ENCODE measurements at regions of chr1 and their contacts with region 1.

Region 1: GRCh38 chr1:62436466-62437256 is at the start of gene USP1:
- DNase-seq: peak; percentile 100
- H3K4me3 ChIP-seq: peak within 1 kb of the TSS; percentile 73 to 95 (median 78)
- H3K27ac ChIP-seq: peak within 1 kb of the TSS; percentile 89
- H3K4me1 ChIP-seq: peaks cover 13% of the 10 kb centered on the region
- H3K27me3 ChIP-seq: no peaks in the 10 kb centered on the region
- CTCF ChIP-seq: peak in 1 of 2 donors; percentile 7
- POLR2A ChIP-seq: peak; percentile 43
- total RNA-seq, gene USP1: 37.8 and 38.4 TPM in 2 replicates

Region 2: DNA sequence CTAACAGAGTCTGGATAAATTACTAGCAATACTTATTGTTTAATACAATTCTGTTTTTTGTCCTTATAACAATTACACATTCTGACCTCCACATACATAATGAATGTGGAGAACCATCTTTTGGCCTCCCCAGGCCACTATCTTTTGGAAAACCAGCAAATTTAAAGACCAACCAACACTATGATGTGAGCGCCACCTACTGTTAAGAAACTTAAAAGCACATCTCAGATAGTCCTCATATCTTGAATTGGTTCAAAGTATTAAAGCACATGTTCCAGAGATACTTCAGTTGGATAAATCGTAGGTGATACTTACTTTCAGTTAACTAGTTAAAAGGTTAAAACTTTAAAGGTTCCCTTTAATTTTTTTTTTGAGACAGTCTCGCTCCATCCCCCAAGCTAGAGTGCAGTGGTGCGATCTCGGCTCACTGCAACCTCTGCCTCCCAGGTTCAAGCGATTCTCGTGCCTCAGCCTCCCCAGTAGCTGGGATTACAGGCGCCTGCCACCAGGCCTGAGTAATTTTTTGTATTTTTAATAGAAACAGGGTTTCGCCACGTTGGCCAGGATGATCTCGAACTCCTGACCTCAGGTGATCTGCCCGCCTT is 29.2 kb before region 1 on chr1:
- CTCF ChIA-PET with region 1: no interaction called
- POLR2A ChIA-PET with region 1: no interaction called
- dilution Hi-C with region 1: no loop called
- intact Hi-C with region 1: no loop called
- DNase-seq: peak; percentile 46
- H3K4me3 ChIP-seq: no peak overlapping the region
- H3K27ac ChIP-seq: no peak overlapping the region
- H3K4me1 ChIP-seq: no peaks in the 10 kb centered on the region
- H3K27me3 ChIP-seq: no peaks in the 10 kb centered on the region
- CTCF ChIP-seq: peak; percentile 55 to 56
- POLR2A ChIP-seq: no peak

Region 3: DNA sequence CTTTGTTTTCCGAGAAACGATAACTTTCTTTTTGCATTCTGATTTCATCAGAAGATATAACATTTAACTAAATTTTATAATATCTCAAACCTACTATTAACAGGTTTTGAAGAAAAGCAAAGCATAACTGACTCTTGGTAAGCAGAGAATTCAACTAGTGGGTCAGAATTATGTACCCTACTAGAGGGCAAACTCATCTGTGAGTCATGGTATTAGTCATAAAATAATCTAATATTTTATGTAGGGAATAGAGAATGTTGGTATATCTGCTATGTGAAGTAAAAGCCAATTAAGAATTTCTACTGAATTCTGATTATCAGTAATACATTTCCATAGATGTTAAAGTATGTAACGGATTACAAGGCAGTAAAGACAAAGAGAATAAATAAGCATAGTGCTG is 57.0 kb after region 1 on chr1:
- CTCF ChIA-PET with region 1: no interaction called
- POLR2A ChIA-PET with region 1: no interaction called
- dilution Hi-C with region 1: no loop called
- intact Hi-C with region 1: no loop called
- DNase-seq: peak; percentile 5
- H3K4me3 ChIP-seq: no peak overlapping the region
- H3K27ac ChIP-seq: no peak overlapping the region
- H3K4me1 ChIP-seq: no peaks in the 10 kb centered on the region
- H3K27me3 ChIP-seq: no peaks in the 10 kb centered on the region
- CTCF ChIP-seq: no peak
- POLR2A ChIP-seq: no peak

Region 4: DNA sequence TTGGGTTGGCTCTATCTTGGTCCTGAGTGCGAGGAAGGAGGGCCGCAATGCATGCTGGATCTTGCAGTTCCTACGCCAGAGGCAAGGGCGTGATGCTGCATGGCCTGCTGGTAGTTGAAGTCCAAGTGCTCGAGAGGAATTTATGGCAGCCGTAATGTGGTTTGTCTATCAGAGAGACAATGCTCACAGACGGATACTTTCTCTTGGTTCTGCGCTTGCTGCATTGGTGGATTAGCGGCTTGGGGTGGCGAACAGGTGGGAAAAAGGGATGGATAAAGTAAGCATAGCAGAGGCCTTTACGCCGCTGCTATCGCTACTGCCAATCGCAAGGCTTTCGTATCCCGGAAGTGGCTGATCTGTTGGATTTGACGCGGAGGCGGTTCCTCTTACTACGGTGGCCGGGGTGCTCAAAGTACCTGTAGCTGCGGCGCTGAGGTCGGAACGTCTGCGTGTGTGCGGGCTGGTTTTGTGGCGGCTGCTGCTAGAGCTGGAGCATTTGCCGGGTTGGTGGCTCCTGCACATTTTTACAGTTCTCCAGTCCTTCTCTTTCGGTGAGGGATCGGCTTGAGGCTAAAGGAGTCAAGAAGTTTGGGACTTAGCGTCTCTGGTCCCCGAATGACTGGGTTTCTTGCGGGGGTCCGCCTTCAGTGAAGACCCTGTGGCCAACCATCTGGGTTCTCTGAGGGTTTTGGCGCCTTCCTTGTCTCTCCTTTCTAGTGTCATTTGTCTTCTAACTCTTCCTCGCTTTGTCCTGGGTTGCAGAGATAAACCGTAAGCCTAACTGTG is 347.3 kb after region 1 on chr1 and contains the start of gene ATG4C:
- CTCF ChIA-PET with region 1: no interaction called
- POLR2A ChIA-PET with region 1: interaction called, 5 read pairs
- dilution Hi-C with region 1: no loop called
- intact Hi-C with region 1: loop called (anchors 1 kb)
- DNase-seq: peak; percentile 99
- H3K4me3 ChIP-seq: peak within 1 kb of the TSS; percentile 30 to 78 (median 66)
- H3K27ac ChIP-seq: peak within 1 kb of the TSS; percentile 67
- H3K4me1 ChIP-seq: peaks cover 7% of the 10 kb centered on the region
- H3K27me3 ChIP-seq: peaks cover 11 to 15% of the 10 kb centered on the region in 2 experiments
- CTCF ChIP-seq: no peak
- POLR2A ChIP-seq: peak; percentile 88
- total RNA-seq, gene ATG4C: 9.5 and 11.8 TPM in 2 replicates

Region 5: GRCh38 chr1:63124666-63125191 is 688.1 kb after region 1 on chr1:
- CTCF ChIA-PET with region 1: no interaction called
- POLR2A ChIA-PET with region 1: no interaction called
- dilution Hi-C with region 1: no loop called
- intact Hi-C with region 1: loop called (anchors 5 kb)
- DNase-seq: peak; percentile 78
- H3K4me3 ChIP-seq: peak overlapping the region in 1 of 3 experiments; percentile 38
- H3K27ac ChIP-seq: peak overlapping the region; percentile 69
- H3K4me1 ChIP-seq: peaks cover 26% of the 10 kb centered on the region
- H3K27me3 ChIP-seq: no peaks in the 10 kb centered on the region
- CTCF ChIP-seq: no peak
- POLR2A ChIP-seq: no peak